OCI-LY7 (cell line): ENCODE measurements at regions of chr1 and their contacts with region 1.

Region 1: GRCh38 chr1:52404116-52404986 is at the starts of genes ORC1 and PRPF38A:
- DNase-seq: peak; percentile 100
- H3K4me3 ChIP-seq: peak within 1 kb of the TSS; percentile 85
- H3K27ac ChIP-seq: peak within 1 kb of the TSS; percentile 83
- H3K4me1 ChIP-seq: peaks cover 26% of the 10 kb centered on the region
- CTCF ChIP-seq: peak; percentile 80
- total RNA-seq, gene ORC1: 30.9 and 37.7 TPM in 2 replicates
- total RNA-seq, gene PRPF38A: 23.6 and 31.8 TPM in 2 replicates

Region 2: GRCh38 chr1:52141513-52142219 is 262.7 kb before region 1 on chr1 and contains the start of gene ZFYVE9:
- CTCF ChIA-PET with region 1: no interaction called
- POLR2A ChIA-PET with region 1: no interaction called
- intact Hi-C with region 1: loop called (anchors 2 kb)
- DNase-seq: peak; percentile 90
- H3K4me3 ChIP-seq: peak within 1 kb of the TSS; percentile 73
- H3K27ac ChIP-seq: peak within 1 kb of the TSS; percentile 70
- H3K4me1 ChIP-seq: peaks cover 38% of the 10 kb centered on the region
- CTCF ChIP-seq: peak; percentile 69
- total RNA-seq, gene ZFYVE9: 5.6 and 9.4 TPM in 2 replicates

Region 3: GRCh38 chr1:52552505-52553361 is 148.4 kb after region 1 on chr1 and contains the start of gene TUT4:
- CTCF ChIA-PET with region 1: interaction called, 8 read pairs
- POLR2A ChIA-PET with region 1: interaction called, 4 read pairs
- intact Hi-C with region 1: loop called (anchors 2 kb)
- DNase-seq: peak; percentile 85
- H3K4me3 ChIP-seq: peak within 1 kb of the TSS; percentile 77
- H3K27ac ChIP-seq: peak within 1 kb of the TSS; percentile 78
- H3K4me1 ChIP-seq: peaks cover 27% of the 10 kb centered on the region
- CTCF ChIP-seq: peak; percentile 49
- total RNA-seq, gene TUT4: 72.4 and 102 TPM in 2 replicates

Region 4: GRCh38 chr1:52665006-52665941 is 260.9 kb after region 1 on chr1:
- CTCF ChIA-PET with region 1: interaction called, 4 read pairs
- POLR2A ChIA-PET with region 1: no interaction called
- intact Hi-C with region 1: loop called (anchors 5 kb)
- DNase-seq: no peak
- H3K4me3 ChIP-seq: no peak overlapping the region
- H3K27ac ChIP-seq: no peak overlapping the region
- H3K4me1 ChIP-seq: no peaks in the 10 kb centered on the region
- CTCF ChIP-seq: no peak